Stomach (tissue), 19 donors: ENCODE measurements at regions of chr12 and their contacts with region 1.

Region 1: DNA sequence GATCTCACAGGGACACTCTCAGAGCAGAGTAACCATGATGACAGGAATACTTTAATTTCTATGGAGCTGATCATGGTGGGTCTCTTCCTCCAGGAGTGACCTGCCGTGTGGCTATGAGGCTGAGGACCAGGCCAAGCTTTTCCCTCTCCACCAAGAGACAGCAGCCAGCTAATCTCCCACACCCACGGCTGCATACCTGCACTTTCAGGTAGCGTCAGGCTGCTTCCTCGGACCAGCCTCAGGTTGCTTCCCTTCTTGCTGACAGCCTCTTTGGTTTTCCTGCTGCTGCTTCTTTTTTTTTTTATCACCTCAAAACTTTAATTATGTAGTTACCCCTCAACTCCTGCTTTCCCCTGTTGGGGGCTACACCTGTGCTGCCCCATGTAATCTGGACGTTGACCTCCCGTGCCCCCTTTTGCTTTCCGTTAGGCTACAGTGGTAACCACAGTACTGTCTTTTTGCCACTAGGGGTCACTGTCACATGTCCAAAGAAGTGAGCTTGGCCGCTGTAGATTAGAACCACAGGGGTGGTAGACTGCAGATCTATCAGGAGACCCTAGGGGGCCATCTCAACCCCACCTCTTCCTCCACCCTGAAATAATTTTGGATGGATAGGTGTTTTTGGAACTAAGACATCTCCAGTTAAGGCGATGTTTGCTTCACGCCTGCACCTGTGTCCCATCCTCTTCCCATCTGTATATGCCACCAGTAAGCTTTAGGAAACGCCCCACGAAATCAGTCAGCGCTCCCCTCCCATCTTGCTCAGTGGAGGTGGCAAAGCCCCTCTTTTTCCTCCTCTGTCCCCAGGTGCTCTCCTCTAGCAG is 7.8 kb upstream of the PIP4K2C start:
- DNase-seq: peak; percentile 59 to 91
- H3K4me3 ChIP-seq: no peak overlapping the region
- H3K27ac ChIP-seq: no peak overlapping the region
- H3K4me1 ChIP-seq: no peaks in the 10 kb centered on the region
- H3K27me3 ChIP-seq: peaks cover 0 to 13% (median 0%) of the 10 kb centered on the region in 3 donors
- CTCF ChIP-seq: peak in 5 of 7 experiments; percentile 92 to 96 (median 94)
- EP300 ChIP-seq: no peak
- POLR2A ChIP-seq: no peak

Region 2: DNA sequence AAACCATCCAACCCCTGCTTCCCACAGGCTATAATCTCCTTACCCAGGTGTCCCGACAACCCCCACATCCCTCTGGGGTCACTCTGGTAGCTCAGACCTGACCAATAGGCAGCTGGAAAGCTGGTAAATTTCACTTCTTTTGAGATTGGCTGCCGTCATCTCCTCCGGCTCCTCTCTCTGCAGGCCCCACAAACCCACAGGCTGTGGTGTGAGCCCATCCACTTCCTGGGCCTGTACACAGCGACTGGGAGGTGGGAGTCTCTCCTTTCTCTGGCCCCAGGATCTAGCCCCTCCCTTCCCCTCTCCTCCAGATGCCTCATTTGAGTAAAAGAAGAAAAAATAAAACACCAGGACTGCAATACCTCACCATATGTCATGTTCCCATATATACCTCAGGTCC is 147.9 kb before region 1 on chr12:
- intact Hi-C with region 1: no loop called
- DNase-seq: peak in 1 of 2 donors; percentile 57
- H3K4me3 ChIP-seq: no peak overlapping the region
- H3K27ac ChIP-seq: no peak overlapping the region
- H3K4me1 ChIP-seq: peaks cover 0 to 9% (median 4%) of the 10 kb centered on the region in 4 donors
- H3K27me3 ChIP-seq: no peaks in the 10 kb centered on the region
- CTCF ChIP-seq: no peak
- EP300 ChIP-seq: no peak
- POLR2A ChIP-seq: no peak

Region 3: DNA sequence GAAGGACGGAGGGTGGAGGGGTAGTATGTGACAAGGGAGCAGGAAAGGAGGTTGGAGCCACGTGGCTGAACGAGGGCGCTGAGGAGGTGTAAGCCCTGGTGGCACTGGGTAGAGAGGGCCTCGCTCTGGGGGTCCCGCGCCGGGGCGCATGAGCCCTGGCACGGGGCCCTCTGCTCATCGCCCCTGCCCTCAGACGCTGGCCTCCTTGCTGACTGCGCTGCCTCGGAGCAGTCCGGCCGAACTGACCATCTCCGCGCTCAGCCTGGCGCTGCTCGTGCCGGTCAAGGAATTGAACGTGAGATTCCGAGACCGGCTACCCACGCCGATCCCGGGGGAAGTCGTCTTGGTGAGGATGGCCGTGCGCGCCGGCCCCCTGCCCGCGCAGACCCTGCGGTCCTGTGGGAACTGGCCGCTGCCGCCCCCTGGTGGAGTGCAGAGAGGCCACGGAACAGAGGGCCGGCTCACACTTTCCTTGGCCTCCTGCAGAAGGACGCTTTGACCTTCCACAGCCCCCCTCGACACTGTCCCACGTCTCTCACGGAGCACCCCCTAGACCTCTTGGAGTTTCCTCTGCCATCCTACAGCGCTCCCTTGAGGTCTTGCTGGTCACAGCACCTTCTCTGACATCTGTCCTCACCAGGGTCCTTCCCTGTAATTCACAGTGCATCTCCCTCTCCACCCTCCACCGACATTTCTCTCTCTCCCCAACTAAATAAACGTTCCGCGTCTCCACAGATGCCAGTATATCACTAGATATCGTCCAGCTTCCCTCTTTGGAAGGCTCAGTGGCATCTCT is 38.5 kb after region 1 on chr12:
- intact Hi-C with region 1: loop called (anchors 5 kb)
- DNase-seq: peak; percentile 62 to 86
- H3K4me3 ChIP-seq: peak overlapping the region; percentile 39 to 58 (median 45)
- H3K27ac ChIP-seq: no peak overlapping the region
- H3K4me1 ChIP-seq: peaks cover 15 to 27% (median 21%) of the 10 kb centered on the region in 4 donors
- H3K27me3 ChIP-seq: peaks cover 3 to 100% (median 73%) of the 10 kb centered on the region in 3 donors
- CTCF ChIP-seq: peak in 5 of 7 experiments; percentile 77 to 92 (median 90)
- EP300 ChIP-seq: no peak
- POLR2A ChIP-seq: no peak